Body of pancreas (tissue), 4 donors: ENCODE measurements at regions of chr7 and their contacts with region 1.

Region 1: DNA sequence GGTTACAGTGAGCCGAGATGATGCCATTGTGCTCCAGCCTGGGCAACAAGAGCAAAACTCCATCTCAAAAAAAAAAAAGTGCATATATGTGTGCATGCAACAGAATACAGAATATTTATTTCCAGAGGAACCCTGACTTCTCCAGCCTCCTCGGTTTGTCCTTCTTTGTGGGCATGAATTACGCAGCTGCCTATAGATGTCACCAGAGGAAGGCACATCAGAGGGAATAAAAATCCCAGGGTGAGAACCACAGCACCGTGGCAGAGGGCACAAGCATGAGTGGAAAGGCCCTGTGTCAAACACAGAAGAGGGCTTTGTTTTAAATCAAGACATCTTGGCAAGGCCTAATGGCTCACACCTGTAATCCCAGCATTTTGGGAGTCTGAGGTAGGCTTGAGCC is 24.4 kb upstream of the OCM2 start:
- DNase-seq: no peak
- ATAC-seq: no peak
- H3K4me3 ChIP-seq: no peak overlapping the region
- H3K27ac ChIP-seq: no peak overlapping the region
- H3K4me1 ChIP-seq: no peaks in the 10 kb centered on the region
- H3K27me3 ChIP-seq: no peaks in the 10 kb centered on the region
- CTCF ChIP-seq: no peak
- POLR2A ChIP-seq: no peak

Region 2: DNA sequence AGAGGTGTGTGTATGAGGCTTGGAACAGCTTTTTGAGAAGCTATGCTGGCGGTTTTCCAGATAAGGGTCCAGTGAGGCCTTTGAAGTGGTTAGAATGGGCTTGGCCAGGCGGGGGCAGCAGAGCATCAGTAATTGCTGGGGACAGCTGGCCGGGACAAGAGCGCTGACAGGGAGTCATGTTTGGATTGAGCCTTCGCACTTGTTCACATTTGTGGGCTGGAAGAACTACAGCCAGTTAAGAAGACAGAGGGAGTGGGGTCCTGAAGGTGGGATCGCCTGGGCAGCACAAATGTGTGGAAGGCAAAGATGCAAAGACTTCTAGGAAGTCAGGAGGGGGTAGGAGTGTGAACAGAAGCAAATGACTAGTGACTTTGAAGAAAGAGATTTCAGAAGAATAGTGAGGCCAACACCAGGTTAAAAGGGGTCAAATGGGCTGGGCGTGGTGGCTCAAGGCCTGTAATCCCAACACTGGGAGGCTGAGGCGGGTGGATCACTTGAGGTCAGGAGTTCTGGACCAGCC is 909.6 kb before region 1 on chr7:
- intact Hi-C with region 1: loop called (anchors 10 kb)
- DNase-seq: peak; percentile 87 to 91 (median 88)
- ATAC-seq: peak; percentile 85
- H3K4me3 ChIP-seq: no peak overlapping the region
- H3K27ac ChIP-seq: no peak overlapping the region
- H3K4me1 ChIP-seq: peaks cover 6% of the 10 kb centered on the region
- H3K27me3 ChIP-seq: peaks cover 0 to 4% of the 10 kb centered on the region in 2 donors
- CTCF ChIP-seq: peak; percentile 55 to 89 (median 84)
- POLR2A ChIP-seq: no peak

Region 3: DNA sequence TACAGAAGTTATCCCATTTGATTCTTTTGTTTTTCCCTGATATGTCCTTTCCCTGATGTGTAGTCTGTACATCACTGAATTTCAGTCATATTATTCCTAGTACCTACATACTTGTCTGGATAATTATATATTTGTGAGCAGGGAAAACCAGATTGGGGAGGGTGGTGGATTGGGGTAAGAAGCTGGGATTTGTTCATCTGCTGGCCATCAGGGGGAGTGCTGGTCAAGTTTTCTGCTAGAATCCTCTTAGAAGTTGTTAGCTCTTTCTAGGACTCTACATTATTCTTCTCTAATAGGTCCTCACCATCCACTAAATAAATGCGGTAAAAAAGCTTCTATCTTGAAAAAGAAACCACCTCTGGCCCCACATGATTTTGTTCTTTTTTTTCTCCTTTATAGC is 515.1 kb before region 1 on chr7:
- intact Hi-C with region 1: loop called (anchors 10 kb)
- DNase-seq: peak; percentile 36 to 44 (median 38)
- ATAC-seq: no peak
- H3K4me3 ChIP-seq: no peak overlapping the region
- H3K27ac ChIP-seq: no peak overlapping the region
- H3K4me1 ChIP-seq: no peaks in the 10 kb centered on the region
- H3K27me3 ChIP-seq: no peaks in the 10 kb centered on the region
- CTCF ChIP-seq: peak; percentile 25 to 57 (median 54)
- POLR2A ChIP-seq: no peak

Region 4: GRCh38 chr7:98194672-98195457 is 180.5 kb after region 1 on chr7:
- intact Hi-C with region 1: no loop called
- DNase-seq: no peak
- ATAC-seq: no peak
- H3K4me3 ChIP-seq: no peak overlapping the region
- H3K27ac ChIP-seq: no peak overlapping the region
- H3K4me1 ChIP-seq: no peaks in the 10 kb centered on the region
- H3K27me3 ChIP-seq: no peaks in the 10 kb centered on the region
- CTCF ChIP-seq: no peak
- POLR2A ChIP-seq: no peak